Activated T-helper 1 cell treated with anti-CD3 and anti-CD28 coated beads, Interleukin-12 subunit alpha, Interleukin-12 subunit beta, Interleukin-2, Interleukin-4 antibody, amounts not matched to agents 30 ng/mL and 10 ng/mL and 1 ng/mL, durations not matched to agents 14 hours and 24 hours and 36 hours (primary cell): ENCODE measurements at regions of chr19 and their contacts with region 1.

Region 1: GRCh38 chr19:45817010-45817724 is 2.1 kb upstream of the RSPH6A start:
- DNase-seq: peak; percentile 89
- H3K4me3 Mint-ChIP-seq: no peak overlapping the region
- H3K27ac Mint-ChIP-seq: no peak overlapping the region
- H3K4me1 Mint-ChIP-seq: no peaks in the 10 kb centered on the region
- H3K27me3 Mint-ChIP-seq: no peaks in the 10 kb centered on the region

Region 2: DNA sequence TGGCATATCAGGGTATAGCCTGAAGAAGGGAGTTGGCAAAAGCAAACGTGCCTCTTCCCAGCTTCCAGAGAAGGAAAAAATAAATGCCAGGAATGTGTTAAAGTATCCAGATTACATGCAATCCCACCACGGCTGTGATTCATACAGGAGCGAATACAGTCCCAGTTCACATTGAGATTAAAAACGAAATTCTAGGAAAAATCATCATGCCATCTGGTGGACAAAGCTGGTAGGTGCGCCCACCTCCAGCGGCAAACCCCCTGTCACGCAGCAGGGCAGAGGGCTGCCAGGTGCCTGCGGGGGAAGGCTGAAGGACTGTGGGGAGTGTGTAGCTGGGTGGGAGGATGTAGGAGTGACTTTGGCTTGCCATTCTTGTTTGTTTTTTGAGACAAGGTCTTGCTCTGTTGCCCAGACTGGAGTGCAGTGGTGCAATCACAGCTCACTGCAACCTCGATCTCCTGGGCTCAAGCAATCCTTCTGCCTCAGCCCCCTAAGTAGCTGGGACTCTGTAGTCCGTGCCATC is 18.1 kb before region 1 on chr19:
- intact Hi-C with region 1: loop called (anchors 2 kb)
- DNase-seq: peak; percentile 33
- H3K4me3 Mint-ChIP-seq: no peak overlapping the region
- H3K27ac Mint-ChIP-seq: no peak overlapping the region
- H3K4me1 Mint-ChIP-seq: peaks cover 7% of the 10 kb centered on the region
- H3K27me3 Mint-ChIP-seq: peaks cover 49% of the 10 kb centered on the region

Region 3: DNA sequence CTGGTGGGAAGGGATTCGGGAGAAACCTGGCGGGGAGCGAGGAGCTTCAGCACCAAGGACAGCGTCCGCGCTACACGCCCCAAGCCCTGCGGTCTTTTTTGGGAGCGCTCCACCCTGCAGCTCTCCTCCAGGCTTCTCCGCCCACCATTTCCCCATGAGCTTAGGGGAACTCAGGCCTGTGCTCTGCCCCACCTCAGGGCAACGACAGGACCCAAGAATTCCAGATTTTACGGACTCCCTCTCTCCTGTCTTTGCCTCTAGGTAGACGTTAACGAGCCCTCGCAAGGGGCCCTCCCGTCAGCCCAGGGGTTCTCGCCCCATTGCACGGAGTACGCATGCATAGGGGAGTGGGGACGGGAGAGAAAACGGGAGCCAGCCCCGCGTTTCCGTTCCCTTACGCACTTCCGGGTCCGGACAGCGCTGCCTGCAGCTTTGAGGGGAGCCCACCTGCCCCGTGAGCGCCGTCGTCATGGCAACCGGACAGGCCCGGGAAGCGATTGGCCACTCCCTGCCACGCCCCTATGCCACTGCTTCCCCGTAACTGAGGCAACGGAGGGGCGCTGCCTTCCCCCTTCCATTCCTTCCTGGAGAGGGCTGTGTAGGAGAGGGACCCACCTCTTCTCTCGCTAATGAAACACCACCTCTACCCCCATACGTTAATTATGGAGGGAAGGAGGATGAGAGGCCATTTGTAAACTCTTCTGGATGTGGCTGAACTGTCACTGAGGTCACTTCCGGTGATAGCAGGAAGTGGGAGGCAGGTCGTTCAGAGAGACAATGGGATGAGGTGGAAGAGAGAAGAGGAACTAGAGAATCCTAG is 135.7 kb after region 1 on chr19:
- intact Hi-C with region 1: no loop called
- DNase-seq: peak; percentile 40
- H3K4me3 Mint-ChIP-seq: peak overlapping the region; percentile 72
- H3K27ac Mint-ChIP-seq: peak overlapping the region; percentile 42
- H3K4me1 Mint-ChIP-seq: peaks cover 22% of the 10 kb centered on the region
- H3K27me3 Mint-ChIP-seq: peaks cover 9% of the 10 kb centered on the region